ENCODE measurements at regions of chr19 and their contacts with region 1.

Region 1: GRCh38 chr19:40444192-40445028 is at the start of gene SERTAD3:
- DNase-seq: peak; percentile 95 to 97 (median 96)
- ATAC-seq: peak; percentile 81
- H3K4me3 ChIP-seq: peak within 1 kb of the TSS; percentile 90
- H3K27ac ChIP-seq: peak within 1 kb of the TSS; percentile 95
- H3K4me1 ChIP-seq: peaks cover 24 to 29% of the 10 kb centered on the region in 2 experiments
- H3K27me3 ChIP-seq: no peaks in the 10 kb centered on the region
- CTCF ChIP-seq: peak; percentile 29 to 63 (median 60); a peak in 5 of 6 replicates
- EP300 ChIP-seq: no peak; the same call in 1 of the 2 replicates
- POLR2A ChIP-seq: peak; percentile 85
- RAD21 ChIP-seq: peak; percentile 36 to 55; a peak in 3 of 4 replicates
- polyA plus RNA-seq, gene SERTAD3: 5.4 to 5.9 TPM

Region 2: DNA sequence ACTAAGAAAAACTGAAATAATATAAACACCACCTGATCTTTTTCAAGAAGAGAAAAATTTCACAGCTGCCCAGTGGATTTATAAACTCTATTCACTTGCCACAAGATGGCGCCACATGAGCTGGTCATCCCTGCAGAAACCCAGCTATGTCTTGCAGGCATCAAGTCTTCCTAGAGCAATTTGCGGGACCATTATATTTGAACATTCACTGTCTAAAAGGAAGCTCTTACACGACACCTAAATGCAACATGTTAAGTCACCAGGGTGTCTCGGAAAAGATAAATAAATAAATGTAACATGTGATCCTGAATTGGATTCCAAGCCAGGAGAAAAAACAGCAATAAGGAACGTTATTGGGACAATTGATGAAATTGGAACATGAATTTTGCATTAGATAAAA is 139.0 kb before region 1 on chr19:
- CTCF ChIA-PET with region 1: interaction called, 4 read pairs
- POLR2A ChIA-PET with region 1: interaction called, 3 read pairs
- in situ Hi-C with region 1: no loop called
- intact Hi-C with region 1: loop called (anchors 1 kb)
- DNase-seq: peak; percentile 79 to 92 (median 84)
- ATAC-seq: peak; percentile 93
- H3K4me3 ChIP-seq: no peak overlapping the region
- H3K27ac ChIP-seq: no peak overlapping the region
- H3K4me1 ChIP-seq: no peaks in the 10 kb centered on the region; a peak in 2 of 5 replicates
- H3K27me3 ChIP-seq: no peaks in the 10 kb centered on the region
- CTCF ChIP-seq: peak; percentile 77 to 94 (median 80)
- EP300 ChIP-seq: no peak
- POLR2A ChIP-seq: no peak
- RAD21 ChIP-seq: peak; percentile 86 to 89

Region 3: GRCh38 chr19:40348125-40348913 is 96.1 kb before region 1 on chr19 and contains the starts of genes C19orf47 and PLD3:
- CTCF ChIA-PET with region 1: no interaction called
- POLR2A ChIA-PET with region 1: interaction called, 3 read pairs
- in situ Hi-C with region 1: no loop called
- intact Hi-C with region 1: loop called (anchors 5 kb)
- DNase-seq: peak; percentile 100
- ATAC-seq: peak; percentile 99
- H3K4me3 ChIP-seq: peak within 1 kb of the TSS; percentile 70
- H3K27ac ChIP-seq: peak within 1 kb of the TSS; percentile 79
- H3K4me1 ChIP-seq: peaks cover 7 to 9% of the 10 kb centered on the region in 2 experiments; a peak in 3 of 5 replicates
- H3K27me3 ChIP-seq: no peaks in the 10 kb centered on the region
- CTCF ChIP-seq: no peak
- EP300 ChIP-seq: peak; percentile 56
- POLR2A ChIP-seq: peak; percentile 84
- RAD21 ChIP-seq: no peak
- polyA plus RNA-seq, gene C19orf47: 0.08 to 0.66 TPM
- polyA plus RNA-seq, gene PLD3: 2.3 to 5.8 TPM

Region 4: GRCh38 chr19:40425450-40426287 is 18.7 kb before region 1 on chr19 and contains the start of gene SERTAD1:
- CTCF ChIA-PET with region 1: no interaction called
- POLR2A ChIA-PET with region 1: interaction called, 25 read pairs
- in situ Hi-C with region 1: no loop called
- intact Hi-C with region 1: loop called (anchors 1 kb)
- DNase-seq: peak; percentile 97 to 100 (median 98)
- ATAC-seq: peak; percentile 88
- H3K4me3 ChIP-seq: peak within 1 kb of the TSS; percentile 80
- H3K27ac ChIP-seq: peak within 1 kb of the TSS; percentile 90
- H3K4me1 ChIP-seq: peaks cover 9 to 34% of the 10 kb centered on the region in 2 experiments; a peak in 4 of 5 replicates
- H3K27me3 ChIP-seq: no peaks in the 10 kb centered on the region
- CTCF ChIP-seq: peak; percentile 50 to 65 (median 58); a peak in 5 of 6 replicates
- EP300 ChIP-seq: no peak
- POLR2A ChIP-seq: peak; percentile 97
- RAD21 ChIP-seq: peak in 1 of 2 experiments; percentile 18; a peak in 2 of 4 replicates
- polyA plus RNA-seq, gene SERTAD1: 0.15 to 0.85 TPM

Region 5: DNA sequence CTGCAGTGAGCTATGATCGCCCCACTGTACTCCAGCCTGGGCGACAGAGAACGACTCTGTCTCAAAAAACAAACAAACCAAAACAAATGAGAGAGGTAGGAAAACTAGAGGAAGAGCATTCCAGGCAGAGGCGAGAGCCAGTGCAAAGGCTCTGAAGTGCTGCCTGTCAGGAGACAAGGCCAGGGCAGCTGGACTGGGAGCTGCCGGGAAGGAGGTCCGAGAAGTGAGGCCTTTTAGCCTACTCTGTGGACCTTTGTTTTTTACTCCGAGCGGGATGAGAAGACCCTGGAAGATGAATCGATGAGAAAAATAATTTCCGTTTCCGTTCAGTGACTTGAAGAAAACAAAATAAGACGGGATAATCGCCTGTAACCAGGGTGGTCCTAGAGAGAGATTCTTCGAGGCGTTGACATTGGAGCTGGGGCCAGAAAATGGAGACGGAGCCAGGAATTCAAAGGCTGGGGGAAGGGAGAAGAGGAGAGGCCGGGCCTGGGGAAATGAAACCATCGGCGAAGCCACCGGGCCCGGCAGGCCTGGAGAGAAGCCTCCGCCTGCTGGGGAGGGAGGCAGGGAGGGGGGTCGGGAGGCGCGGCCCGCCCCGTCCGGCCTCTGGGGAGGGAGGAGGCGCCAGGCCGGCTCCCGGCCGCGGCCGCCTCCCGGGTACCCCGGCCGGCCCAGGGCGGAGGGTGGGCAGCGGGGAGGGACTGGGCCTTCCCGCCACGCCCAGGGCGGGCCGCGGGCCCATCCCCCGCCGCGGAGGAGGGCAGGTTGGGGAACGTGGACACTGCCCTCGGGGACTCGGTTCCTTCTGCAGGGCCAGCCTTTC is 10.8 kb before region 1 on chr19:
- CTCF ChIA-PET with region 1: no interaction called
- POLR2A ChIA-PET with region 1: interaction called, 28 read pairs
- in situ Hi-C with region 1: no loop called
- intact Hi-C with region 1: no loop called
- DNase-seq: peak; percentile 92 to 93 (median 93)
- ATAC-seq: peak; percentile 97
- H3K4me3 ChIP-seq: peak overlapping the region; percentile 40
- H3K27ac ChIP-seq: peak overlapping the region; percentile 94
- H3K4me1 ChIP-seq: peaks cover 12 to 41% of the 10 kb centered on the region in 2 experiments
- H3K27me3 ChIP-seq: no peaks in the 10 kb centered on the region
- CTCF ChIP-seq: no peak
- EP300 ChIP-seq: peak; percentile 35; the same call in 1 of the 2 replicates
- POLR2A ChIP-seq: peak; percentile 79
- RAD21 ChIP-seq: no peak

Region 6: GRCh38 chr19:40523322-40524047 is 79.1 kb after region 1 on chr19:
- CTCF ChIA-PET with region 1: no interaction called
- POLR2A ChIA-PET with region 1: no interaction called
- in situ Hi-C with region 1: no loop called
- intact Hi-C with region 1: loop called (anchors 5 kb)
- DNase-seq: peak; percentile 70 to 88 (median 77)
- ATAC-seq: peak; percentile 92
- H3K4me3 ChIP-seq: 0 out of 2 replicates have a peak overlapping the region, but pooled peaks have one; percentile 5
- H3K27ac ChIP-seq: peak overlapping the region; percentile 54
- H3K4me1 ChIP-seq: peaks cover 41 to 62% of the 10 kb centered on the region in 2 experiments
- H3K27me3 ChIP-seq: no peaks in the 10 kb centered on the region
- CTCF ChIP-seq: peak; percentile 90 to 95 (median 92)
- EP300 ChIP-seq: no peak
- POLR2A ChIP-seq: no peak
- RAD21 ChIP-seq: peak; percentile 41 to 69

Measured in K562 (cell line).